ENCODE measurements at regions of chr15 and their contacts with region 1.

Region 1: GRCh38 chr15:35078221-35078915 is 6.7 kb downstream of the NANOGP8 start:
- DNase-seq: peak; percentile 65
- CTCF ChIP-seq: peak; percentile 86

Region 2: DNA sequence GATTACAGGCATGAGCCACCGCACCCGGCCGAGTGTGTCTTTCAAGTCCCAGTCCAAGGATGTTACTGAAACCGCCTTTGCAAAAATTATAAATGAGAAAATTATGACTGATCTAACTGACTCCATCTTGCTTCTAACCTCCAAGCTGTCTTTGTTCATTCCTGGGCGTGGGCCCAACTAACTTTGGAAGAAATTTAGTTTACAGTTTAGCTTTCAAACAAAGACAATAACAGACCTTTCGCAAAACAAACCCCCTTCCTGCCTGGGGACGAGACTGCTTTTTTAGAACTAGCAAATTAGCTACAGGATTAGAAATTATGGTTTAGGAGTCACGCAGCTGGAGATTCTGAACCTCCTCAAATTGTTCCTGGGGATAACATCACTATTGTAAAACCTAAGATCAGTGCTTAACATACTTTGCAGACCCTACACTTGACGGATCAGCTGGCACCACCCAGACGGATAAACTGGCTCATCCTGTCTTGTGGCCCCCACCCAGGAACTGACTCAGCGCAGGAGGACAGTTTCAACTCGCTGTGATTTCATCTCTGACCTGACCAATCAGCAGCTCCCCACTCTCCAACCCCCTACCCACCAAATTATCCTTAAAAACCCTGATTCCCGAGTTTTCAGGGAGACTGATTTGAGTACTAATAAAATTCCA is 17.1 kb before region 1 on chr15:
- CTCF ChIA-PET with region 1: interaction called, 10 read pairs
- POLR2A ChIA-PET with region 1: no interaction called
- DNase-seq: no peak
- CTCF ChIP-seq: no peak

Region 3: DNA sequence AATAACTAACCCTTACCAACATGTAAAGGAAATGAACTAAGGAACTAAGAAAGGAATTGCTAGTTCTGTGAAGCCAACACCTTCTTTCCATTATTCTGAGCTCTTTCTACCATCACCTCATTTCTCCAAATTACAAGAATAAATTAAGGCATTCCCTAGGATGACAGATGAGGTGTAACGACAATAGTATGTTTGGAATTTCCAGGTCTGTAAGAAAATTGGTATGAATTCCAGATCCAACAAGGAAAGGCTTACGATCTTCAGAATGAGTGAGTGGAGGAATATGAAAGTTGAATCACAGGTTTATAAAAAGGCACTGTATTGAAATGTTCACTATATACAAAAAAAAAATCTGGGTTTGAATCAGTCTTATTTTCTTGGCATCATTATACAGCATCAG is 11.2 kb after region 1 on chr15:
- CTCF ChIA-PET with region 1: interaction called, 23 read pairs
- POLR2A ChIA-PET with region 1: no interaction called
- DNase-seq: no peak
- CTCF ChIP-seq: no peak

Region 4: GRCh38 chr15:35289024-35289617 is 210.8 kb after region 1 on chr15:
- CTCF ChIA-PET with region 1: interaction called, 14 read pairs
- POLR2A ChIA-PET with region 1: no interaction called
- DNase-seq: peak; percentile 21
- CTCF ChIP-seq: peak; percentile 70